ENCODE measurements at regions of chr3 and their contacts with region 1.

Region 1: DNA sequence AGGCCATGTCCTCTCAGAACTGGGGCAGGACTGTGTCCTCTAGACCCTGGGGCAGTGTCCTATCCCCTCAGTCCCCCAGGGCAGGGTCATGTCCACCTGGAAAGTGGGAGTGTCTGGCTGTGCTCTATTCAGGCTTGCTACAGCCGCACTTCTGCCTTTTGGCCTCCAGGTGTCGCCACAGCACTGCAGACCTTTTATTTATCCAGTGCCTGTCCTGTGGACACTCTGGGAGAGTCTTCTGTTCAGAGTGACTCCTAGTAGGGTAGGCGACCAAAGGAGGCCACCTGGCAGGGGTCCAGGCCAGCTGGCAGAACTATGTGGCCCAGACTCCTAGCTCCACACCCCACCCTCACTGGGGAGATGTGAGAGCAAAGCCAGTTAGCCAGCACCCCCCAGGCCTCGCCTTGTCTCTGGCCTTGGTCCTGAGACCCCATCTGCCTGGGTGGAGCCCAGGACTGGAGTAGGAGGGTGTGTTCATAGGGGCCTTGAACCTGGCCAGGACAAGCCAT is 3.9 kb downstream of the TMIE start:
- DNase-seq: peak; percentile 47 to 83 (median 59)
- ATAC-seq: peak; percentile 88
- H3K4me3 ChIP-seq: no peak overlapping the region
- H3K4me3 Mint-ChIP-seq: no peak overlapping the region
- H3K27ac ChIP-seq: no peak overlapping the region
- H3K27ac Mint-ChIP-seq: no peak overlapping the region
- H3K4me1 ChIP-seq: peaks cover 30% of the 10 kb centered on the region
- H3K4me1 Mint-ChIP-seq: peaks cover 17% of the 10 kb centered on the region
- H3K27me3 ChIP-seq: peaks cover 0 to 9% of the 10 kb centered on the region in 2 experiments
- H3K27me3 Mint-ChIP-seq: no peaks in the 10 kb centered on the region
- CTCF ChIP-seq: peak; percentile 99

Region 2: GRCh38 chr3:46593274-46593862 is 111.7 kb before region 1 on chr3:
- CTCF ChIA-PET with region 1: no interaction called
- POLR2A ChIA-PET with region 1: no interaction called
- intact Hi-C with region 1: no loop called
- DNase-seq: no peak
- ATAC-seq: no peak
- H3K4me3 ChIP-seq: no peak overlapping the region
- H3K4me3 Mint-ChIP-seq: no peak overlapping the region
- H3K27ac ChIP-seq: no peak overlapping the region
- H3K27ac Mint-ChIP-seq: no peak overlapping the region
- H3K4me1 ChIP-seq: no peaks in the 10 kb centered on the region
- H3K4me1 Mint-ChIP-seq: no peaks in the 10 kb centered on the region
- H3K27me3 ChIP-seq: no peaks in the 10 kb centered on the region
- H3K27me3 Mint-ChIP-seq: no peaks in the 10 kb centered on the region
- CTCF ChIP-seq: no peak

Region 3: GRCh38 chr3:46895204-46895660 is 190.2 kb after region 1 on chr3:
- CTCF ChIA-PET with region 1: no interaction called
- POLR2A ChIA-PET with region 1: no interaction called
- intact Hi-C with region 1: loop called (anchors 1 kb)
- DNase-seq: peak; percentile 69 to 87 (median 76)
- ATAC-seq: peak; percentile 92
- H3K4me3 ChIP-seq: no peak overlapping the region
- H3K4me3 Mint-ChIP-seq: no peak overlapping the region
- H3K27ac ChIP-seq: no peak overlapping the region
- H3K27ac Mint-ChIP-seq: no peak overlapping the region
- H3K4me1 ChIP-seq: peaks cover 18% of the 10 kb centered on the region
- H3K4me1 Mint-ChIP-seq: no peaks in the 10 kb centered on the region
- H3K27me3 ChIP-seq: peaks cover 42 to 43% of the 10 kb centered on the region in 2 experiments
- H3K27me3 Mint-ChIP-seq: peaks cover 81% of the 10 kb centered on the region
- CTCF ChIP-seq: peak; percentile 82

Region 4: GRCh38 chr3:46909535-46910442 is 204.7 kb after region 1 on chr3:
- CTCF ChIA-PET with region 1: interaction called, 3 read pairs
- POLR2A ChIA-PET with region 1: no interaction called
- intact Hi-C with region 1: loop called in 1 of 2 experiments (anchors 1 kb)
- DNase-seq: peak; percentile 61 to 86 (median 71)
- ATAC-seq: peak; percentile 89
- H3K4me3 ChIP-seq: no peak overlapping the region
- H3K4me3 Mint-ChIP-seq: no peak overlapping the region
- H3K27ac ChIP-seq: no peak overlapping the region
- H3K27ac Mint-ChIP-seq: no peak overlapping the region
- H3K4me1 ChIP-seq: peaks cover 21% of the 10 kb centered on the region
- H3K4me1 Mint-ChIP-seq: peaks cover 18% of the 10 kb centered on the region
- H3K27me3 ChIP-seq: no peaks in the 10 kb centered on the region
- H3K27me3 Mint-ChIP-seq: no peaks in the 10 kb centered on the region
- CTCF ChIP-seq: peak; percentile 76

Region 5: GRCh38 chr3:46998121-46998851 is 293.2 kb after region 1 on chr3:
- CTCF ChIA-PET with region 1: no interaction called
- POLR2A ChIA-PET with region 1: no interaction called
- intact Hi-C with region 1: loop called (anchors 2 kb)
- DNase-seq: peak; percentile 59 to 88 (median 74)
- ATAC-seq: peak; percentile 79
- H3K4me3 ChIP-seq: no peak overlapping the region
- H3K4me3 Mint-ChIP-seq: no peak overlapping the region
- H3K27ac ChIP-seq: no peak overlapping the region
- H3K27ac Mint-ChIP-seq: peak overlapping the region; percentile 25
- H3K4me1 ChIP-seq: peaks cover 35% of the 10 kb centered on the region
- H3K4me1 Mint-ChIP-seq: peaks cover 16% of the 10 kb centered on the region
- H3K27me3 ChIP-seq: no peaks in the 10 kb centered on the region
- H3K27me3 Mint-ChIP-seq: no peaks in the 10 kb centered on the region
- CTCF ChIP-seq: peak; percentile 86

Region 6: GRCh38 chr3:47370887-47371697 is 666.0 kb after region 1 on chr3:
- CTCF ChIA-PET with region 1: no interaction called
- POLR2A ChIA-PET with region 1: no interaction called
- intact Hi-C with region 1: loop called in 1 of 2 experiments (anchors 5 kb)
- DNase-seq: peak in 12 of 14 experiments; percentile 7 to 60 (median 22)
- ATAC-seq: no peak
- H3K4me3 ChIP-seq: no peak overlapping the region
- H3K4me3 Mint-ChIP-seq: no peak overlapping the region
- H3K27ac ChIP-seq: no peak overlapping the region
- H3K27ac Mint-ChIP-seq: no peak overlapping the region
- H3K4me1 ChIP-seq: peaks cover 5% of the 10 kb centered on the region
- H3K4me1 Mint-ChIP-seq: no peaks in the 10 kb centered on the region
- H3K27me3 ChIP-seq: no peaks in the 10 kb centered on the region
- H3K27me3 Mint-ChIP-seq: no peaks in the 10 kb centered on the region
- CTCF ChIP-seq: peak; percentile 26

Measured in CD4-positive, alpha-beta T cell (primary cell).